Endothelial cell of umbilical vein (primary cell): ENCODE measurements at regions of chr3 and their contacts with region 1.

Region 1: GRCh38 chr3:11288786-11289682 is 16.8 kb downstream of the ATG7 start:
- DNase-seq: peak; percentile 95
- H3K4me3 ChIP-seq: peak overlapping the region in 1 of 3 experiments; percentile 43
- H3K27ac ChIP-seq: peak overlapping the region; percentile 98
- H3K4me1 ChIP-seq: peaks cover 50% of the 10 kb centered on the region
- H3K27me3 ChIP-seq: no peaks in the 10 kb centered on the region
- CTCF ChIP-seq: no peak
- POLR2A ChIP-seq: peak; percentile 64

Region 2: DNA sequence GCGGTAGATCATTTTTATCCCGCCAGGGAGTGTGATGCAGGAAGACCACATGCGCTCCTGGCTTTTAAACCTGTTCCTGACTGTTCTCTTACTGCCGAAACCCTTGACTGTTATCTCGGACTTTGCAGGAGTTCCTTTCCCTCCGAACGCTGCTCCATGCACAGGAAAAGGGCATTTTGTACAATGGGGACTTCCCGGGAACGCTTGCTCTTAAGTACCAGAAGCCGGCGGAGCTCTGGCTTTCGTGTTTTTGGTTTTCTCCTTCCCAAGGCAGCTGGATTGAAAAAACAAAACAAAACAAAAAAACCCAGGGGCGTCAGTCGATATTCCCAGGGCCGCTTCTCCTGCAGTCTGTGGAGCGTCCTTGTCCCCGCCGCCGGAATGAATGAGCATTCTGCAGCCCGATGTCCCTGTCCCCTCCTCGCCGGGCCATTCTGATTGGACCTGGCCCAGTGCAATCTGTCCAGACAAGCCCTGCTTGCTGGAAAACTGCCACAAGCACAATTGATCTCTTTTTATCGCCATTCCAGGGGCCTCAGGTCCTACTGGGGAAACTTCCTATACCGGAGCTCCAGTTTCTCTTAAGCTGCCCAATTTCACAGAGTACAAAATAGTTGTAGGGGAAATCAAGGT is 251.7 kb before region 1 on chr3:
- CTCF ChIA-PET with region 1: no interaction called
- POLR2A ChIA-PET with region 1: no interaction called
- dilution Hi-C with region 1: no loop called
- intact Hi-C with region 1: no loop called
- DNase-seq: peak; percentile 48
- H3K4me3 ChIP-seq: no peak overlapping the region
- H3K27ac ChIP-seq: no peak overlapping the region
- H3K4me1 ChIP-seq: no peaks in the 10 kb centered on the region
- H3K27me3 ChIP-seq: peaks cover 27 to 28% of the 10 kb centered on the region in 2 experiments
- CTCF ChIP-seq: no peak
- POLR2A ChIP-seq: no peak

Region 3: DNA sequence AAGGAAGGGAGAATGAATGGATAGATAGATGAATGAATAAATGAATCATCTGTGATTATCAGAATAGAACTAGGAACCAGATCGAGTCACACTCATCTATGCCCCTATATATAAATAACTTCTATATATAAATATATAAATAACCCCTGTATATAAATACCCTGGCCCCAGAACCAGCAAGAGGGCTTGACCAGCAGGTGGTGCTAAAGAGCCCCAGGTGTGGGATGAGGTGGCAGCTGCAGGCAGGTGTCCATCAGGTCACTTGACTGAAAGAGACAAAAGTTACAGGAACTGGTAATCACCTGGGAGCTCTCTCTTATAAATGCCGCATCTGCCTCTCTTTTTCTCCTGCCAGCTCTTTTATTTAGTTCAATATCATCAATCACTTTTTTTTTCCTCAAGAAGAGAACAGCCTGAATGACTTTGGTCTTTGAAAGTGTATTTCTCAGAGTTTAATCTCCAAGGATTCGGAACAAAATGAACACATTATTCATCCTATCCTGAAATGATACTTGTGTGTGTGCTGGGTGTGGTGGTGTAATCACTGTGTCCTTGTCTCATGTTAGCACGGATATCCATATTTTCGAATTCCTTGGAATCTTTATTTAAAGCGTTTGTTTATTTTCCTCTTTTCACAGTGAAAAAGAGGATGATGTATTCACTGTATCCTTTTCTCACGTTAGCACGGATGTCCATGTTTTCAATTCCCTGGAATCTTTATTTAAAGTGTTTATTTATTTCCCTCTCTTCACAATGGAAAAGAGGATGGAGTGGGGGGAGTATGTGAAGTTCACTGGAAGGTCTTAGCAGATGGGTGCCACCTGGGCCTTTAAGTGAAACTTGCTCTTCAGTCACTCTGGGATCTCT is 52.2 kb before region 1 on chr3:
- CTCF ChIA-PET with region 1: interaction called, 18 read pairs
- POLR2A ChIA-PET with region 1: interaction called, 11 read pairs
- dilution Hi-C with region 1: no loop called
- intact Hi-C with region 1: loop called (anchors 1 kb)
- DNase-seq: peak; percentile 61
- H3K4me3 ChIP-seq: no peak overlapping the region
- H3K27ac ChIP-seq: peak overlapping the region; percentile 40
- H3K4me1 ChIP-seq: peaks cover 23% of the 10 kb centered on the region
- H3K27me3 ChIP-seq: no peaks in the 10 kb centered on the region
- CTCF ChIP-seq: peak; percentile 75 to 78
- POLR2A ChIP-seq: no peak

Region 4: DNA sequence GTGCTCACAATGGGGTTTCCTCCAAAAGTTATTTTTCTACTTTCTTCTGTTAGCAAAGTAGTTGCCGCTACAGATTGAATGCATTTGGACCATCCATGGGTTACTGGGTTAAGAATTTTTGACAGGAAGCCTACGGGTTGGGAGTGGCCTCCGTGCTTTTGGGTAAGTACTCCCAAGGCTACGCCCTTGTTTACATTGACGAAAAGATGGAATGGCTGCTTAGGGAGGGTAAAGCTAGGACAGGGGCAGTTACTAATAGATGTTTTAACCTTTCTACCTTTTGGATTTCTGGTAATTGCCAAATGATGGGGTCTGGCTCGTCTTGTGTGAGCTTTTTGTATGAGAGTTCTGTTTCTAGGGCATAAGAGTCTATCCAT is 37.2 kb before region 1 on chr3:
- CTCF ChIA-PET with region 1: interaction called, 3 read pairs
- POLR2A ChIA-PET with region 1: interaction called, 7 read pairs
- dilution Hi-C with region 1: no loop called
- intact Hi-C with region 1: loop called (anchors 2 kb)
- DNase-seq: no peak
- H3K4me3 ChIP-seq: no peak overlapping the region
- H3K27ac ChIP-seq: no peak overlapping the region
- H3K4me1 ChIP-seq: peaks cover 6% of the 10 kb centered on the region
- H3K27me3 ChIP-seq: no peaks in the 10 kb centered on the region
- CTCF ChIP-seq: no peak
- POLR2A ChIP-seq: no peak

Region 5: DNA sequence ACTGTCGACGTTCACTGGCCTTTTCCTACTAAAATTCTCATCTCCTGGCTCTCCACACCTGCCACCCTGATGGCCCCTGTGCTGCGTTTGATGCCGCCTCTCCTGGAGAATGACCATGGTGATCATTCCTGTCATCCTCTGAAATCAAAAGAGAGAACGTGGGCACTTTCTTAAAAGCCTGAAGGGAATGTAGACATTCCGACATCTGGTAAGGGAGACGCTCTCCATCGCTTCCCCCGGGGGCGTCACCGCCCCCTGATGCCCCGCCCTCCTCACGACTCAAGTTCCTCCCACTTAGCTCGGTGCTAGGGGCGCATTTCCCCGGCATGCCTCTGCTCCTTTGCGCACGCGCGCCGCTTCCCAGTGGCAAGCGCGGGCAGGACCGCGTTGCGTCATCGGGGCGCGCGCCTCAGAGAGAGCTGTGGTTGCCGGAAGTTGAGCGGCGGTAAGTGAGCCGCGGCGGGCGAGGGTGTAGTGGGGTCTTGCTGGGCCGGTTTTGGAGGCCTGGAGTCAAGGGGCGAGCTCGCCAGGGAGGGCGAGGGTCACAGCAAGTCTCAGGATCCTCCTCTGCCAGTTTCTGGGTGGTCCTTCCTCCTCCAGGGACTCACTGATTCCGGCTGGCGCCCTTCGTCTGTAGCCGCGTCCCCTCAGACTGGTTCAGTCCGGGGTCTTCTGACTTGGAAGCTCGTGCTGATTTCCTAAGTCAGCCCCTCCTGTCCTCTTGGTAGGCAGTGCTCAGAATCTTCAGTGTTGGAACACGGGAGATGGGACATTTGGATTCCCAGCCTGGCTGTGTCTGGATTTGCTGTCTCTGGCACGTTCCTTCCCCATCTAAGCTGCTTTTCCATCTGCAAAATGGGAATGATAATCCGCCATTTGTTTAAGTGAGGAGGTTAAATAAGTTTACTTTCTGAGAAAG is 16.8 kb before region 1 on chr3 and contains the start of gene ATG7:
- CTCF ChIA-PET with region 1: interaction called, 35 read pairs
- POLR2A ChIA-PET with region 1: interaction called, 18 read pairs
- dilution Hi-C with region 1: no loop called
- intact Hi-C with region 1: loop called (anchors 1 kb)
- DNase-seq: peak; percentile 98
- H3K4me3 ChIP-seq: peak within 1 kb of the TSS; percentile 76 to 89 (median 88)
- H3K27ac ChIP-seq: peak within 1 kb of the TSS; percentile 89
- H3K4me1 ChIP-seq: peaks cover 15% of the 10 kb centered on the region
- H3K27me3 ChIP-seq: no peaks in the 10 kb centered on the region
- CTCF ChIP-seq: no peak
- POLR2A ChIP-seq: peak; percentile 89
- total RNA-seq, gene ATG7: 48.3 and 50.4 TPM in 2 replicates

Region 6: DNA sequence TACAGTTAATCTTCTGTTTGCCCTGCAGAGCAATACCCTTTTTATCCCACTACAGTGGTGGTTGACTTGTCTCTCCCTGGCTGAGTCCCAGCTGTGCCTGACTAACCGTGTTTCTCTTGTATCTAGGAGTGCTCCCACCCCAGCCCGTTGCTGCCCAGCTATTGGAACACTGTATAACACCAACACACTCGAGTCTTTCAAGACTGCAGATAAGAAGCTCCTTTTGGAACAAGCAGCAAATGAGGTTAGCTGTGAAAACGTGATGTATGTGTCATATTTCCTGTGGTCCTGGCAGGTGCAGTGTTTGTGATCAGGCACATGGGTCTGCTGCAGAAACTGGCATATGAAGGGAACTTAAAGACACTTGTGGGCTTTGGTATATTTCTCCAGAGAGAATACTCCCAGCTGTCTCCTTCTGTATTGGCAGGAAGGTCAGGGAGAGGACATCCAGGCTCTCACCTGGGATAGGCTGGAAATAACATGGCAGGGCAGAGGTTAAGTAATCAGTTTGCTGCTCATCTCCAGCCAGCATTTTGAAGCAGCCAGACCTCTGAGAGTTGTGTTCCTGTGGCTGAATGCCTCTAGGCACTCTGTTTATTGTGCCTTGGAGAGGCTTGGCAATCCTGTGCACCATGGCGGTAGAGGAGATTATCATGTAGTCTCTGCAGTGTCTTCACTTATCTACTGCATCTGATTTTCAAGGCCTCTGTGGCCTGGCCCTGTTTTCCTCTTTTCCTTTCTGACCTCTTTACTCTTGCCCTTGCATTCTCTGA is 18.0 kb after region 1 on chr3:
- CTCF ChIA-PET with region 1: interaction called, 9 read pairs
- POLR2A ChIA-PET with region 1: interaction called, 6 read pairs
- dilution Hi-C with region 1: no loop called
- intact Hi-C with region 1: loop called (anchors 2 kb)
- DNase-seq: peak; percentile 71
- H3K4me3 ChIP-seq: no peak overlapping the region
- H3K27ac ChIP-seq: peak overlapping the region; percentile 47
- H3K4me1 ChIP-seq: peaks cover 22% of the 10 kb centered on the region
- H3K27me3 ChIP-seq: no peaks in the 10 kb centered on the region
- CTCF ChIP-seq: no peak
- POLR2A ChIP-seq: no peak

Region 7: GRCh38 chr3:11328196-11328945 is 39.3 kb after region 1 on chr3:
- CTCF ChIA-PET with region 1: no interaction called
- POLR2A ChIA-PET with region 1: no interaction called
- dilution Hi-C with region 1: no loop called
- intact Hi-C with region 1: loop called (anchors 1 kb)
- DNase-seq: peak; percentile 81
- H3K4me3 ChIP-seq: no peak overlapping the region
- H3K27ac ChIP-seq: peak overlapping the region; percentile 56
- H3K4me1 ChIP-seq: peaks cover 40% of the 10 kb centered on the region
- H3K27me3 ChIP-seq: no peaks in the 10 kb centered on the region
- CTCF ChIP-seq: no peak
- POLR2A ChIP-seq: no peak

Region 8: GRCh38 chr3:11430624-11431023 is 141.6 kb after region 1 on chr3:
- CTCF ChIA-PET with region 1: no interaction called
- POLR2A ChIA-PET with region 1: no interaction called
- dilution Hi-C with region 1: no loop called
- intact Hi-C with region 1: no loop called
- DNase-seq: no peak
- H3K4me3 ChIP-seq: no peak overlapping the region
- H3K27ac ChIP-seq: no peak overlapping the region
- H3K4me1 ChIP-seq: no peaks in the 10 kb centered on the region
- H3K27me3 ChIP-seq: no peaks in the 10 kb centered on the region
- CTCF ChIP-seq: no peak
- POLR2A ChIP-seq: no peak

Region 9: DNA sequence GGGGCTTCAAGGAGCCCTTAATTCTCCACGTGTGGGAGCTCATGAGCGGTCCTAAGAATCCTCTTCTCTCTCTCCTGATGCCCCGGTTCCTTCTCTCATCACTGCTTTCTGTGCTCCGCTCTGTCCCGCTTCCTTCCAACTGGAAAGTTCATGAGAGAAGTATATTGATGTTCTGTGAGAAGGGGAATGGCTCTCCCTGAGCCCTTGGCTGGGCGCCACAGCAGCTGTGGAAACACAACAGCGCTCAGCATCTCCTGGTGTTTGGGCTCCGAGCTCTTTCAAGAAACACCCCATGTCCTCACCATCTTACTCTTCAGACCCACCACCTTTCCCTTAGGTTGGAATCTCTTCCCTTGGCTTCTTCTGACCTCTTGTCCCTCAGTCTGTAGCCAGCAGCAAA is 193.0 kb after region 1 on chr3:
- CTCF ChIA-PET with region 1: no interaction called
- POLR2A ChIA-PET with region 1: no interaction called
- dilution Hi-C with region 1: no loop called
- intact Hi-C with region 1: no loop called
- DNase-seq: peak; percentile 87
- H3K4me3 ChIP-seq: no peak overlapping the region
- H3K27ac ChIP-seq: no peak overlapping the region
- H3K4me1 ChIP-seq: peaks cover 34% of the 10 kb centered on the region
- H3K27me3 ChIP-seq: no peaks in the 10 kb centered on the region
- CTCF ChIP-seq: no peak
- POLR2A ChIP-seq: no peak